ENCODE measurements at regions of chr6 and their contacts with region 1.

Region 1: GRCh38 chr6:89432875-89433251 is at the start of gene ANKRD6:
- DNase-seq: peak; percentile 52 to 67 (median 66)
- H3K4me3 ChIP-seq: peak within 1 kb of the TSS; percentile 60 to 81 (median 67)
- H3K4me3 Mint-ChIP-seq: peak within 1 kb of the TSS; percentile 86 to 96
- H3K27ac ChIP-seq: no peak within 1 kb of the TSS
- H3K27ac Mint-ChIP-seq: peak within 1 kb of the TSS in 2 of 7 donors; percentile 37 to 71
- H3K4me1 ChIP-seq: peaks cover 12 to 13% of the 10 kb centered on the region in 2 donors
- H3K4me1 Mint-ChIP-seq: peaks cover 20% of the 10 kb centered on the region
- H3K27me3 ChIP-seq: no peaks in the 10 kb centered on the region
- H3K27me3 Mint-ChIP-seq: peaks cover 4 to 13% (median 7%) of the 10 kb centered on the region in 3 donors
- CTCF ChIP-seq: peak; percentile 93
- polyA plus RNA-seq, gene ANKRD6: 0.93 to 3.0 (median 1.2) TPM

Region 2: DNA sequence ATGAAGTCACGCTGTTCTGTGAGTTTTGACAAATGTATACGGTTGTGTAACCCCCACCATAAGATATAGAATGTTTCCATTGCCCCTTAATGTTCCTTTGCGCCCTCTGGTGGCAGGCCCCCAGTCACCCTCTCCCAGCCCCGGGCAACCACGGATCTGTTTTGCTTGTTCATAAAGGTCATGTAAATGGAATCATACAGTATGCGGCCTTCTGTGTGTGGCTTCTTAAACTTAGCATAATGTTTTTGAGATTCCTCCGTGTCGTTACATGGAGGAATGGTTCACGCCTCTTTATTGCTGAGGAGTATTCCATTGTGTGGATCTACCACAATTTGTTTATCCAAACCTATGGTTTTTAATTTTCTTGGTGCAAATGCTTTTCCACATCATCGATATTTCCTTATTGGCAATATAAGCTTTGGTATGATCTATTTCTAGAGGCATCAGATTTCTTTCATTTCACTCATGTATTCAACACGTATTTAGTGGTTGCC is 177.3 kb after region 1 on chr6:
- intact Hi-C with region 1: loop called (anchors 1 kb)
- DNase-seq: peak; percentile 52 to 70 (median 66)
- H3K4me3 ChIP-seq: no peak overlapping the region
- H3K4me3 Mint-ChIP-seq: no peak overlapping the region
- H3K27ac ChIP-seq: no peak overlapping the region
- H3K27ac Mint-ChIP-seq: no peak overlapping the region
- H3K4me1 ChIP-seq: no peaks in the 10 kb centered on the region
- H3K4me1 Mint-ChIP-seq: peaks cover 8% of the 10 kb centered on the region
- H3K27me3 ChIP-seq: no peaks in the 10 kb centered on the region
- H3K27me3 Mint-ChIP-seq: peaks cover 0 to 5% (median 1%) of the 10 kb centered on the region in 3 donors
- CTCF ChIP-seq: peak; percentile 97